ENCODE measurements at regions of chr11 and their contacts with region 1.

Region 1: DNA sequence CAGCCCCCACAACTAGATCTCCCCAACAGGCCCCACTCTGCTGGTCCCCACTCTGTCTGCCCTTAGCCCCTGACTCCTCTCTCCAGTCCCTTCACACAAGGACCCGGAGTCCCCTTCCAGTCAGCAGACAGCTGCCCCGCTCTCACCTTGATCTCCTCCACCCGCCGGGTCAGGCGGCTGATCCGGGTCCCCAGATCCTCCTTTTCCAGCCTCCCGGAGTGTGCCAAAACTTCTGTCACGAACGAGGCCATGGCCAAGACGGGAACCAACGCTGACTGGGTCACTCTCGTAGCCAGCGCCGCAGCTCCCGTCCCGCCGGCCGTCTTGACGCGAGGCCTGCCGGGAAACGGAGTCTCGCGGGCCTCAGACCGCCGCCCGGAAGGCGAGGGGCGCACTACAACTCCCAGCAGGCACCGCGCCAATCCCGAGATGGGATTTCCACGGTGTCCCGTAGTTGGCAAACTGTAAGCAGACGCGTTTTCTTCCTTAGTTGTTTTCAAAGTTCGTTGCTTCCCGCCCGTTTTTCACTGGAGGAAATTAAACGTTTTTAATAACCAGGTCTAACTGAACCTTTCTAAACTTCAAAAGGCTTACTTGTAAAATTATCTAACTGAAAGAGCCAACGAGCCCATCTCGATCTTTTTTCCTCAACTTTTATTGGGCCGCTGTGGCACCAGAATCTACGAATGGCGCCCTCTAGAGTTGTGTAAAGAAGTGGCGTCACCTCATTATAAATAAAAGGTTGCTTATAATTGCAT is at the start of gene ZW10:
- DNase-seq: peak; percentile 86 to 92 (median 91)
- ATAC-seq: peak; percentile 99
- H3K4me3 ChIP-seq: peak within 1 kb of the TSS; percentile 86
- H3K4me3 Mint-ChIP-seq: peak within 1 kb of the TSS; percentile 92 to 100 (median 98)
- H3K27ac ChIP-seq: peak within 1 kb of the TSS; percentile 81
- H3K27ac Mint-ChIP-seq: peak within 1 kb of the TSS; percentile 89 to 97 (median 95)
- H3K4me1 ChIP-seq: peaks cover 0 to 4% of the 10 kb centered on the region in 2 donors
- H3K4me1 Mint-ChIP-seq: peaks cover 19 to 39% (median 30%) of the 10 kb centered on the region in 7 donors
- H3K27me3 ChIP-seq: no peaks in the 10 kb centered on the region
- H3K27me3 Mint-ChIP-seq: peaks cover 0 to 10% (median 0%) of the 10 kb centered on the region in 5 donors
- total RNA-seq, gene ZW10: 5.0 to 19.0 (median 10.2) TPM

Region 2: DNA sequence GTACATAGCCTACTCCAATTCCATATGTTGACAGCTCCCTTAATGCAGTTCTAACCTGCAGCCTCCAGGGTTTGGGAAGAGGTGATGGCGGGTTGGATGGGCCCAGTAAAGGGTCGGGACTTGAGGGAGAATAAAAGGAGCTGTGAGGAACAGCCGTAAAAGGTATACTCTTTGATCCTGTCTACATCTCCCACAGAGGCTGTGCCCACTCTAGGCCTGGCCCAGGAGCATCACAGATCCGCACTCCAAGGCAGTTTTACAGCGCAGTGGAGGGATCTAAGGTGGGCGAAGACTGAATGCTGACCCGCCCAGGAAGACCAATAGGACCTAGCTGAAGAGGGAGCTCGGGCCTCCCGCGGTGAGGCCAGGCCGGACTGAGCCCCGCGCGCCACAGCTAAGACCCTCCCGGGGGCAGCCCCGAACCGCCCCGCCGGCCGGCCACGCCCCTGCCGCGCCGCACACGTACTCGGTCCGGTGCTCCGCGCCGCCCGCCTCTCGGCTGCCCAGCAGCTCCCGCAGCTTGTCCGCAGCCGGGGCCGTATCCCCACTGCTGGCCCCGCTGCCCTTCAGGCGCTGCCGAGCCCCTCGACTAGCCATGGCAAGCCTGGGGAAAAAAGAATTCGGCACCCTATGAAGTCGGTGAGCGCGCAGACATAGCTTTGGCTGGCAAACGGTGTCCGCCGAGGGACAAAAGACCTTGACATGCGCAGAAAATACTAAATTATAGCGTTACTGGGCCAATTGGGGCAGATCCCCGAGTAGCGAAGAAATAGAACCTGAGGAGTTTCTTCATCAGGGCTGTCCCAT is 1902.5 kb before region 1 on chr11 and contains the start of gene ALG9:
- CTCF ChIA-PET with region 1: no interaction called
- POLR2A ChIA-PET with region 1: no interaction called
- intact Hi-C with region 1: loop called in 1 of 2 experiments (anchors 1 kb)
- DNase-seq: peak; percentile 79 to 94 (median 88)
- ATAC-seq: peak; percentile 91
- H3K4me3 ChIP-seq: peak within 1 kb of the TSS; percentile 74
- H3K4me3 Mint-ChIP-seq: peak within 1 kb of the TSS; percentile 86 to 96 (median 93)
- H3K27ac ChIP-seq: peak within 1 kb of the TSS; percentile 91
- H3K27ac Mint-ChIP-seq: peak within 1 kb of the TSS; percentile 87 to 98 (median 94)
- H3K4me1 ChIP-seq: peaks cover 8 to 10% of the 10 kb centered on the region in 2 donors
- H3K4me1 Mint-ChIP-seq: peaks cover 9 to 41% (median 34%) of the 10 kb centered on the region in 7 donors
- H3K27me3 ChIP-seq: no peaks in the 10 kb centered on the region
- H3K27me3 Mint-ChIP-seq: no peaks in the 10 kb centered on the region
- total RNA-seq, gene ALG9: 16.4 to 30.2 (median 29.2) TPM

Region 3: GRCh38 chr11:112289588-112290492 is 1483.8 kb before region 1 on chr11:
- CTCF ChIA-PET with region 1: no interaction called
- POLR2A ChIA-PET with region 1: no interaction called
- intact Hi-C with region 1: loop called in 1 of 2 experiments (anchors 10 kb)
- DNase-seq: peak; percentile 77 to 90 (median 86)
- ATAC-seq: peak; percentile 99
- H3K4me3 ChIP-seq: peak overlapping the region; percentile 61
- H3K4me3 Mint-ChIP-seq: peak overlapping the region; percentile 74 to 87 (median 84)
- H3K27ac ChIP-seq: peak overlapping the region; percentile 66
- H3K27ac Mint-ChIP-seq: peak overlapping the region; percentile 0 to 88 (median 51)
- H3K4me1 ChIP-seq: peaks cover 0 to 5% of the 10 kb centered on the region in 2 donors
- H3K4me1 Mint-ChIP-seq: peaks cover 9 to 44% (median 38%) of the 10 kb centered on the region in 7 donors
- H3K27me3 ChIP-seq: no peaks in the 10 kb centered on the region
- H3K27me3 Mint-ChIP-seq: peaks cover 0 to 9% (median 0%) of the 10 kb centered on the region in 5 donors

Region 4: DNA sequence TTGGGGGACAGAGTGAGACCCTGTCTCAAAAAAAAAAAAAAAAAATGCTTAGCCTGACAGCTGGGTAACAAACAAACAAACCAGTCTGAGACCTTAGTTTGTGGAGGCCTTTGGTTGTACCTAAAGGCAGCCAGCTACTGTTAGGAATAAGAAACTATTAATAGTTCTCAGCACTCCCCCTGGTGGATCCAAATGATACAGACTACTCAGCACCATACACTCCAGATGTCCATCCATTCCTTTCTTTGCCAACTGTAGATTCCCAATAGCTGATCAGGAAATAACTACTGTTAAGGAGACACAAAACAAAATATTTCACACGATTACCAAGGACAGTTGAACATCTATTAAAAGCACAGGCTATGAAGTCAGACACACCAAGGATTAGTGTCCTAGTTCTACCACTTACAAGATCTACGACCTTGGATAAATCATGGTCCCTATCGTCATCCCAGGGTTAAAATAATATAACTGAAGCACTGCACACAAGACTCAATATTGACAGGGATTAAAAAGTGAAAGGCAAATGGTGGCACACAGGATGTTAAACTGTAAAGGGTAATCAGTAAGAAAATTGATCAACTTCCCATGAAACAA is 23.2 kb after region 1 on chr11:
- CTCF ChIA-PET with region 1: no interaction called
- POLR2A ChIA-PET with region 1: no interaction called
- intact Hi-C with region 1: loop called in 1 of 2 experiments (anchors 2 kb)
- DNase-seq: peak in 4 of 9 donors; percentile 7 to 24 (median 14)
- ATAC-seq: peak; percentile 75
- H3K4me3 ChIP-seq: no peak overlapping the region
- H3K4me3 Mint-ChIP-seq: no peak overlapping the region
- H3K27ac ChIP-seq: no peak overlapping the region
- H3K27ac Mint-ChIP-seq: no peak overlapping the region
- H3K4me1 ChIP-seq: no peaks in the 10 kb centered on the region
- H3K4me1 Mint-ChIP-seq: no peaks in the 10 kb centered on the region
- H3K27me3 ChIP-seq: no peaks in the 10 kb centered on the region
- H3K27me3 Mint-ChIP-seq: no peaks in the 10 kb centered on the region

Region 5: GRCh38 chr11:114197799-114198500 is 424.4 kb after region 1 on chr11:
- CTCF ChIA-PET with region 1: no interaction called
- POLR2A ChIA-PET with region 1: no interaction called
- intact Hi-C with region 1: no loop called
- DNase-seq: no peak
- ATAC-seq: no peak
- H3K4me3 ChIP-seq: no peak overlapping the region
- H3K4me3 Mint-ChIP-seq: no peak overlapping the region
- H3K27ac ChIP-seq: no peak overlapping the region
- H3K27ac Mint-ChIP-seq: no peak overlapping the region
- H3K4me1 ChIP-seq: peaks cover 0 to 5% of the 10 kb centered on the region in 2 donors
- H3K4me1 Mint-ChIP-seq: peaks cover 6 to 30% (median 25%) of the 10 kb centered on the region in 7 donors
- H3K27me3 ChIP-seq: no peaks in the 10 kb centered on the region
- H3K27me3 Mint-ChIP-seq: no peaks in the 10 kb centered on the region

Region 6: GRCh38 chr11:114400217-114400914 is 626.8 kb after region 1 on chr11 and contains the starts of genes C11orf71 and RBM7:
- CTCF ChIA-PET with region 1: no interaction called
- POLR2A ChIA-PET with region 1: no interaction called
- intact Hi-C with region 1: loop called (anchors 1 kb)
- DNase-seq: peak; percentile 94 to 97 (median 95)
- ATAC-seq: peak; percentile 96
- H3K4me3 ChIP-seq: peak within 1 kb of the TSS; percentile 93
- H3K4me3 Mint-ChIP-seq: peak within 1 kb of the TSS; percentile 89 to 99 (median 97)
- H3K27ac ChIP-seq: peak within 1 kb of the TSS; percentile 96
- H3K27ac Mint-ChIP-seq: peak within 1 kb of the TSS; percentile 96 to 100 (median 99)
- H3K4me1 ChIP-seq: peaks cover 25% of the 10 kb centered on the region in 2 donors
- H3K4me1 Mint-ChIP-seq: peaks cover 33 to 77% (median 68%) of the 10 kb centered on the region in 7 donors
- H3K27me3 ChIP-seq: no peaks in the 10 kb centered on the region
- H3K27me3 Mint-ChIP-seq: no peaks in the 10 kb centered on the region
- total RNA-seq, gene C11orf71: 6.0 to 19.1 (median 17.1) TPM
- total RNA-seq, gene RBM7: 35.8 to 71.3 (median 43.4) TPM

Measured in naive thymus-derived CD4-positive, alpha-beta T cell (primary cell).